Activated naive CD4-positive, alpha-beta T cell treated with anti-CD3 and anti-CD28 coated beads for 36 hours (primary cell): ENCODE measurements at regions of chr16 and their contacts with region 1.

Region 1: GRCh38 chr16:31916056-31916488 is 42.5 kb downstream of the ZNF267 start:
- DNase-seq: no peak
- H3K4me3 Mint-ChIP-seq: no peak overlapping the region
- H3K27ac Mint-ChIP-seq: peak overlapping the region; percentile 18
- H3K4me1 Mint-ChIP-seq: peaks cover 12% of the 10 kb centered on the region
- H3K27me3 Mint-ChIP-seq: no peaks in the 10 kb centered on the region

Region 2: GRCh38 chr16:31754998-31755615 is 161.0 kb before region 1 on chr16:
- CTCF ChIA-PET with region 1: no interaction called
- intact Hi-C with region 1: loop called (anchors 10 kb)
- DNase-seq: no peak
- H3K4me3 Mint-ChIP-seq: no peak overlapping the region
- H3K27ac Mint-ChIP-seq: no peak overlapping the region
- H3K4me1 Mint-ChIP-seq: no peaks in the 10 kb centered on the region
- H3K27me3 Mint-ChIP-seq: no peaks in the 10 kb centered on the region